ENCODE measurements at regions of chr14 and their contacts with region 1.

Region 1: GRCh38 chr14:93137864-93138263 is 22.1 kb upstream of the ITPK1 start:
- DNase-seq: no peak
- ATAC-seq: no peak
- H3K4me3 ChIP-seq: no peak overlapping the region
- H3K4me3 Mint-ChIP-seq: no peak overlapping the region
- H3K27ac ChIP-seq: no peak overlapping the region
- H3K27ac Mint-ChIP-seq: no peak overlapping the region
- H3K4me1 ChIP-seq: no peaks in the 10 kb centered on the region
- H3K4me1 Mint-ChIP-seq: peaks cover 5 to 6% of the 10 kb centered on the region in 2 donors
- H3K27me3 ChIP-seq: no peaks in the 10 kb centered on the region
- H3K27me3 Mint-ChIP-seq: no peaks in the 10 kb centered on the region
- CTCF ChIP-seq: no peak

Region 2: GRCh38 chr14:92728759-92729370 is 409.0 kb before region 1 on chr14:
- intact Hi-C with region 1: no loop called
- DNase-seq: peak in 1 of 2 donors; percentile 18
- ATAC-seq: no peak
- H3K4me3 ChIP-seq: no peak overlapping the region
- H3K4me3 Mint-ChIP-seq: no peak overlapping the region
- H3K27ac ChIP-seq: no peak overlapping the region
- H3K27ac Mint-ChIP-seq: no peak overlapping the region
- H3K4me1 ChIP-seq: peaks cover 19% of the 10 kb centered on the region
- H3K4me1 Mint-ChIP-seq: peaks cover 14 to 19% of the 10 kb centered on the region in 2 donors
- H3K27me3 ChIP-seq: no peaks in the 10 kb centered on the region
- H3K27me3 Mint-ChIP-seq: peaks cover 11 to 38% of the 10 kb centered on the region in 2 donors
- CTCF ChIP-seq: no peak

Region 3: DNA sequence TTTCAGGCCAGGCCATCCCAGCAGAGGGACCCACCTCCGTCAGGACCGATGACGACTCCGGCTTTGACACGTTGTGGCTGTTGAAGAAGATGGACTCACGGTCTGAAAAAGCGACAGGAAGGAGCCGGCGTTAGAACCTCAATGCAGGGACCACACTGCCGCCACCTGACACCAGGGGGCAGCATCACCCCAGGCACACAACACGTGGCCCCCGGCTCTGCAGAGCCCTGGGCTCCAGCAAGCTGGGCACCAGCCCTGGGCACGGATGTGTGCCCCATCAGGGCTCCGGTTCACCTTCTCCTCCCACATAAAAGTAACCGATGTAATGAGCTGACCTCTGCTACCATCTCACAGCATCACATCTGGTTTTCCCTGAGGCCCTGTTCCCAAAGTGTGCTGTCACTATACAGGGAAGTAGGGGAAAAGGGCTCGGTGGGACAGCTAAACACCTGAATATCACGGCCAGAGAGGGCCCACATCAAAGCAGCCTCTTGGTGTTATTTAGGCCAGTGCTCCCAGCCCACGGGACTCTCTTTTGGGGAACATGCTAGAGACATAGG is 185.9 kb before region 1 on chr14:
- intact Hi-C with region 1: loop called (anchors 1 kb)
- DNase-seq: peak; percentile 80 to 88
- ATAC-seq: peak; percentile 90 to 99 (median 97)
- H3K4me3 ChIP-seq: no peak overlapping the region
- H3K4me3 Mint-ChIP-seq: no peak overlapping the region
- H3K27ac ChIP-seq: no peak overlapping the region
- H3K27ac Mint-ChIP-seq: peak overlapping the region in 1 of 2 donors; percentile 31
- H3K4me1 ChIP-seq: peaks cover 8% of the 10 kb centered on the region
- H3K4me1 Mint-ChIP-seq: peaks cover 6 to 8% of the 10 kb centered on the region in 2 donors
- H3K27me3 ChIP-seq: no peaks in the 10 kb centered on the region
- H3K27me3 Mint-ChIP-seq: no peaks in the 10 kb centered on the region
- CTCF ChIP-seq: peak; percentile 92

Region 4: GRCh38 chr14:93103392-93104080 is 34.3 kb before region 1 on chr14:
- intact Hi-C with region 1: loop called (anchors 5 kb)
- DNase-seq: peak; percentile 63 to 84
- ATAC-seq: peak; percentile 96 to 97 (median 96)
- H3K4me3 ChIP-seq: peak overlapping the region; percentile 15
- H3K4me3 Mint-ChIP-seq: peak overlapping the region; percentile 89
- H3K27ac ChIP-seq: peak overlapping the region; percentile 96
- H3K27ac Mint-ChIP-seq: peak overlapping the region; percentile 90 to 96
- H3K4me1 ChIP-seq: peaks cover 54% of the 10 kb centered on the region
- H3K4me1 Mint-ChIP-seq: peaks cover 30 to 56% of the 10 kb centered on the region in 2 donors
- H3K27me3 ChIP-seq: no peaks in the 10 kb centered on the region
- H3K27me3 Mint-ChIP-seq: no peaks in the 10 kb centered on the region
- CTCF ChIP-seq: no peak